Lower lobe of right lung (tissue), 2 donors: ENCODE measurements at regions of chr1 and their contacts with region 1.

Region 1: DNA sequence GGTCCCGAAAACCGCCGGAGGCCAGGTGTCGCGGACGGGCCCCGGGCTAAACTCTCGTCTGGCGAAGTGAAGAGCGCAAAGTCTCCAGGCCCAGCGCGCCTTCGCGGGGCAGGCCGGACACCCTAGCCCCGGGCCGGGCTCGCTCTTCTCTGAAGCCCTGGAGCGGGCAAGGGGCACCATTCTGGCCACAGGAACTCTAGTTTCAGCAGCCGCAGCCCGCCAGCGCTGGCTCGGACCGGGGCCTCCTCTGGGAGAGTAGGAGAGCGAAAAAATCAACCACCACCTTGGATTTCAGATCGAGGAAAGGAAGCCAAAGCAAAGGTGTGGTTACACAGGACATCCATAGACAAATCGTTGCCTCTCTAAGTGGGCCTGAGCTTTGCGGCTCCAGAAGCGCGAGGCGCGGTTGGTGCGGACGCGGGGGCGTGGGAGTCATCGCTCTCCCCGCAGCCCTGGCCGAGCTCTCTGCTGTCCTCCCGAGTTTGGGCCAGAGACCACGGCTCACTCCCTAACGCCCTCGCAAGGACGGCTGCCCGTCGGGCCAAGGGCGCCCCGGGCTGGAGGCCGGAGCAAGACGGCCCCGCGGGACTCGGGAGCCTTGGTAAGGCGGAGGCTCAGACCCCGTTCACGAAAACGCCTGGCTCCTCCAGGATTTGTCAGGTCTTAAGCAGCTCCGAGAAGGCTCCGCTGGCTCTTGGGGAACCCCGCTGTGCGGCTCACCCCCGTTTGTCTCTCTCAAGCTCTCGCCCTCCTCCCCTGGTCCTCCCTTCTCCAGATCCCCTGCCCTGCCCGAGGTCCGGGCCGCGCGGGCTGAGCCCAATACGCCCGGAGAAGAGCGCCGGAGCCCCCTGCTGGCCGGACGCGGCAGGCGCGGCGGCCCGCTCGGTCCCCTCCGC is 132.9 kb upstream of the DPYD start:
- DNase-seq: peak; percentile 69
- ATAC-seq: peak; percentile 97 to 98
- H3K4me3 ChIP-seq: peak overlapping the region; percentile 63
- H3K27ac ChIP-seq: no peak overlapping the region
- H3K4me1 ChIP-seq: peaks cover 10% of the 10 kb centered on the region
- H3K27me3 ChIP-seq: peaks cover 53% of the 10 kb centered on the region
- CTCF ChIP-seq: peak; percentile 98

Region 2: GRCh38 chr1:98468111-98468717 is 414.5 kb after region 1 on chr1:
- intact Hi-C with region 1: loop called (anchors 10 kb)
- DNase-seq: no peak
- ATAC-seq: peak in 1 of 2 donors; percentile 55
- H3K4me3 ChIP-seq: no peak overlapping the region
- H3K27ac ChIP-seq: no peak overlapping the region
- H3K4me1 ChIP-seq: no peaks in the 10 kb centered on the region
- H3K27me3 ChIP-seq: no peaks in the 10 kb centered on the region
- CTCF ChIP-seq: peak; percentile 80